ENCODE measurements at regions of chr2 and their contacts with region 1.

Region 1: GRCh38 chr2:130355578-130356431 is at the start of gene PTPN18:
- DNase-seq: peak; percentile 67
- H3K4me3 Mint-ChIP-seq: peak within 1 kb of the TSS; percentile 83
- H3K27ac Mint-ChIP-seq: peak within 1 kb of the TSS; percentile 52
- H3K4me1 Mint-ChIP-seq: peaks cover 25% of the 10 kb centered on the region
- H3K27me3 Mint-ChIP-seq: no peaks in the 10 kb centered on the region
- total RNA-seq, gene PTPN18: 66.9 and 68.9 TPM in 2 replicates

Region 2: DNA sequence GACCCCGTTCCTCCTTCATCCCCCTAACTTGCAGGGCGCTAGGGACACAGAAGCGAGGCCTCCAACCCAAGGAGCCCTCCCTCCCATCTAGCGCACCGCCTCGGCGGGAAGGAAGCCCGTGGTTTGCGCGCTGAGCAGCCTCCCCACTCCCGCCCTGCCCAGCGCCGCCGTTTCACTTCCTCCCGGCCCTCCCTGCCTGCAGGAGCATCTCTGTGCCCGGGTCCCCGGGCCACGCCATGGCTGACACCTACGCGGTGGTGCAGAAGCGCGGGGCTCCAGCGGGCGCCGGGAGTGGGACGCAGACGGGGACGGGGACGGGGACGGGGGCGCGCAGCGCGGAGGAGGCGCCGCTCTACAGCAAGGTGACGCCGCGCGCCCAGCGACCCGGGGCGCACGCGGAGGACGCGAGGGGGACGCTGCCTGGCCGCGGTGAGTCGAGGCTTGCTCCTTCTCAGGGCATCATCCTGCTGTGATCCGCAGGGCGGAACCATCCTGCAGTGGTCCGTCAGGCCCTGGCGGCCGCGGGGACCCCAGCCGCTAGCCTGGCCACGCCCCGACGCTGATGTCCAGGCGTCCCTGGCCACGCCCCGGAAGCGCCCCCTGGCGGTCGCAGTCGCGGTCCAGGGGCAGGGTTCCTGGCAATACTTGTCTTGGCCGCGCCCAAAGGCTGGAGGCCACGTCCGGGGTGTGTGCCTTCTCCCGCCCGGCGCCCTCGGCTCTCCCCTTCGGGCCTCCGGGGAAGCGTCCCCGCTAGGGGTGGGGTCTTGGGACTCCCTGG is 16.4 kb after region 1 on chr2:
- intact Hi-C with region 1: loop called (anchors 1 kb)
- DNase-seq: peak; percentile 78
- H3K4me3 Mint-ChIP-seq: peak overlapping the region; percentile 96
- H3K27ac Mint-ChIP-seq: peak overlapping the region; percentile 96
- H3K4me1 Mint-ChIP-seq: peaks cover 59% of the 10 kb centered on the region
- H3K27me3 Mint-ChIP-seq: peaks cover 4% of the 10 kb centered on the region

Region 3: DNA sequence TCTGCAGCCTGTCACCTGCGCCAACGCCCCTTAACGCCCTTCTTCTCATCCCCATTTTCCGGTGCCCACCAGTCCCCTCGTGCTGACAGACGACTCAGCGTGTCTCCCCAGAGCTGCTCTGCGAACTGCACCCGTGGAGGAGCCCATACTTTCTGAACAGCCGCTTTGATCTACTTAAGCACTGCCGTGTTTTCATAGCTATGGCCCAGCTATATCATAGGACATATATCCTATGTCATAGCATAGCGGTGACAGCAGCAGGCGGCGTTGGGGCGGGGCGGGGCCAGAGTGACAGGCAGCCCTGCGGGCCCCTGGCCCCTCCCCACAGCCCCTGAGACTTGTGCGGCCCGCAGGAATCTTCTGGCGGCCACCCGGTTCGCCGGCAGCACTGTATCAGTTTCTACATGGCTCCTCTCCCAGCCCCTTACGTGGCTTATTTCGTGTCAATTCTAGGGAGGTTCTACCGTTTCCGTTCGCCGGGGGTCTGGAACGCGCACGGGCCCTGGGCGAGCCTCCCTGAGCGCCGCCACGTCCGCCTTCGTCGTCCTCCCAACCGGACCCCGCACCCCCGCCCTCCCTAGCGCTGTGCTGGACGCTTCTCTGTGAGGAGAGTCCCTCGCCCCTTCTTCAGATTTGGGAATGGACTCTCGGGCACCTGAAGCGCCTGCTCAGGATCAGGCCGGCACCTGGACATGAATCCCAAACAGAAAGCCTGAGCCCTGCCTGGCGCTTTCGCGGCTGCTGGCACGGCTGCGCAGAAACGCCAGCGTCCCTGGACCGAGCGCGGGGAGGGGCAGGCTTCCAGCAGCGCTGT is 35.5 kb after region 1 on chr2:
- intact Hi-C with region 1: loop called (anchors 1 kb)
- DNase-seq: peak; percentile 68
- H3K4me3 Mint-ChIP-seq: peak overlapping the region; percentile 93
- H3K27ac Mint-ChIP-seq: peak overlapping the region; percentile 93
- H3K4me1 Mint-ChIP-seq: peaks cover 19% of the 10 kb centered on the region
- H3K27me3 Mint-ChIP-seq: peaks cover 12% of the 10 kb centered on the region